SK-N-SH (cell line): ENCODE measurements at regions of chr15 and their contacts with region 1.

Region 1: DNA sequence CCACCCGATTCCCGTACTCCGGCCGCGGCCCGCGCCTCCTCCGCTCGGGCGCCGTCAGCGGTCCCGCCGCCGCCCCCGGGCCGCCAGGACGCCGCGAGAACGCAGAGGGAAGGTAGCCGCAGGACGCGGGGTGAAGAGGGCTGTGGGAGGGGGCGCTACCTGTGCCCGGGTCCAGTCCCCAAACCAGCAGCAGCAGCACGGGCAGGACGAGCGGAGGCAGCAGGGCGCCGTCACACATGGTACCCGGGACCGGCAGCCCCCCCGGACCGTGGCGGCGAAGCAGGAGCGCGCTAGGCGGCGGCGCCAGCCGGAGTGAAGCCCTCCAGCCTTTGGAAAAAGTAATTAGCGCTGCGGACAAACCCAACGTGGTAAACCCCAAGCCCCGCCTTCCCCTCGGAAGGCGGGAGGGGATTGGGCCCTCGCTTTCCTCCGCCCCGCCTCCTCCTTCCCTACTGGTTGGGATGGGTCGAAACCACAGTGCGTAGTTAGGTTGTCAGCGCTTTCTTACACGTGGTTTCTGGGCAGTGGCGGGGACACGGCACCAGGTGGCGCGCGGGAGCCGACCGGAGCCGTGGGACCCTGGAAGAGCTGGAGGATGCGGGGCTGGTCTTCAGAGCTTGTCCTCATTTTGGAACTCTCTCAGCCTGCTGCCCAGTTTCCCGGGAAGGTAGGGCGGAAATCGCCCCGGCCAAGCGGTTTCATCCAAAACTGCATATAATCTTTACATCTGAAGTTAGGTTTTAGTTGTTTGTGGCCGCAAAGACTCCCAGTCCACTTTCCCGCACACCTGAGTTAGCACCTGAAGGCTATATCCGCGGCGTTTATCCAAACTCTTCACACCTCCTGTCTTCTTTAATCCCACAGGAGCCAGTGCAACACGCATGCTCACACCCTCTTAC is at the start of gene ADAMTS17:
- DNase-seq: peak; percentile 96
- H3K4me3 ChIP-seq: peak within 1 kb of the TSS; percentile 51 to 56; a peak in 3 of 4 replicates
- H3K27ac ChIP-seq: no peak within 1 kb of the TSS
- H3K4me1 ChIP-seq: peaks cover 0 to 8% of the 10 kb centered on the region in 2 experiments; a peak in 1 of 4 replicates
- H3K27me3 ChIP-seq: no peaks in the 10 kb centered on the region
- CTCF ChIP-seq: peak; percentile 60
- EP300 ChIP-seq: no peak
- RAD21 ChIP-seq: peak; percentile 63
- polyA plus RNA-seq, gene ADAMTS17: not detected in 2 replicates

Region 2: GRCh38 chr15:99928429-99928981 is 413.4 kb before region 1 on chr15:
- CTCF ChIA-PET with region 1: interaction called, 169 read pairs
- POLR2A ChIA-PET with region 1: no interaction called
- DNase-seq: peak; percentile 82
- H3K4me3 ChIP-seq: peak overlapping the region; percentile 45 to 52; a peak in 3 of 4 replicates
- H3K27ac ChIP-seq: no peak overlapping the region
- H3K4me1 ChIP-seq: peaks cover 0 to 4% of the 10 kb centered on the region in 2 experiments; a peak in 1 of 4 replicates
- H3K27me3 ChIP-seq: no peaks in the 10 kb centered on the region; the same call in 1 of the 2 replicates
- CTCF ChIP-seq: peak; percentile 49
- EP300 ChIP-seq: no peak
- RAD21 ChIP-seq: peak; percentile 75

Region 3: GRCh38 chr15:99997112-99997651 is 344.7 kb before region 1 on chr15:
- CTCF ChIA-PET with region 1: interaction called, 10 read pairs
- POLR2A ChIA-PET with region 1: no interaction called
- DNase-seq: peak; percentile 83
- H3K4me3 ChIP-seq: no peak overlapping the region
- H3K27ac ChIP-seq: peak overlapping the region in 1 of 2 experiments; percentile 67; a peak in 2 of 4 replicates
- H3K4me1 ChIP-seq: peaks cover 0 to 24% of the 10 kb centered on the region in 2 experiments; a peak in 2 of 4 replicates
- H3K27me3 ChIP-seq: no peaks in the 10 kb centered on the region
- CTCF ChIP-seq: no peak
- EP300 ChIP-seq: peak in 1 of 2 experiments; percentile 81; a peak in 1 of 4 replicates
- RAD21 ChIP-seq: no peak

Region 4: GRCh38 chr15:100192097-100193080 is 149.5 kb before region 1 on chr15:
- CTCF ChIA-PET with region 1: interaction called, 14 read pairs
- POLR2A ChIA-PET with region 1: no interaction called
- DNase-seq: peak; percentile 32
- H3K4me3 ChIP-seq: no peak overlapping the region
- H3K27ac ChIP-seq: no peak overlapping the region
- H3K4me1 ChIP-seq: peaks cover 0 to 23% of the 10 kb centered on the region in 2 experiments; a peak in 1 of 4 replicates
- H3K27me3 ChIP-seq: no peaks in the 10 kb centered on the region
- CTCF ChIP-seq: no peak
- EP300 ChIP-seq: no peak
- RAD21 ChIP-seq: no peak

Region 5: GRCh38 chr15:100355342-100355741 is 13.4 kb after region 1 on chr15:
- CTCF ChIA-PET with region 1: interaction called, 119 read pairs
- POLR2A ChIA-PET with region 1: interaction called, 3 read pairs
- DNase-seq: no peak
- H3K4me3 ChIP-seq: no peak overlapping the region
- H3K27ac ChIP-seq: no peak overlapping the region
- H3K4me1 ChIP-seq: peaks cover 0 to under 1% of the 10 kb centered on the region in 2 experiments; a peak in 1 of 4 replicates
- H3K27me3 ChIP-seq: no peaks in the 10 kb centered on the region
- CTCF ChIP-seq: no peak
- EP300 ChIP-seq: no peak
- RAD21 ChIP-seq: no peak

Region 6: GRCh38 chr15:100515758-100516157 is 173.8 kb after region 1 on chr15:
- CTCF ChIA-PET with region 1: no interaction called
- POLR2A ChIA-PET with region 1: no interaction called
- DNase-seq: no peak
- H3K4me3 ChIP-seq: no peak overlapping the region
- H3K27ac ChIP-seq: no peak overlapping the region
- H3K4me1 ChIP-seq: no peaks in the 10 kb centered on the region
- H3K27me3 ChIP-seq: no peaks in the 10 kb centered on the region
- CTCF ChIP-seq: no peak
- EP300 ChIP-seq: no peak
- RAD21 ChIP-seq: no peak

Region 7: GRCh38 chr15:100572362-100572983 is 230.6 kb after region 1 on chr15:
- CTCF ChIA-PET with region 1: interaction called, 130 read pairs
- POLR2A ChIA-PET with region 1: no interaction called
- DNase-seq: no peak
- H3K4me3 ChIP-seq: no peak overlapping the region
- H3K27ac ChIP-seq: no peak overlapping the region
- H3K4me1 ChIP-seq: no peaks in the 10 kb centered on the region
- H3K27me3 ChIP-seq: no peaks in the 10 kb centered on the region
- CTCF ChIP-seq: peak; percentile 67
- EP300 ChIP-seq: no peak
- RAD21 ChIP-seq: no peak

Region 8: GRCh38 chr15:101232677-101233076 is 890.8 kb after region 1 on chr15:
- CTCF ChIA-PET with region 1: no interaction called
- POLR2A ChIA-PET with region 1: no interaction called
- DNase-seq: no peak
- H3K4me3 ChIP-seq: no peak overlapping the region
- H3K27ac ChIP-seq: no peak overlapping the region; a peak in 1 of 4 replicates
- H3K4me1 ChIP-seq: peaks cover 0 to 6% of the 10 kb centered on the region in 2 experiments; a peak in 1 of 4 replicates
- H3K27me3 ChIP-seq: no peaks in the 10 kb centered on the region
- CTCF ChIP-seq: no peak
- EP300 ChIP-seq: no peak
- RAD21 ChIP-seq: no peak